ENCODE measurements at regions of chr4 and their contacts with region 1.

Region 1: GRCh38 chr4:48578132-48578968 is 88.3 kb downstream of the ZAR1 start:
- DNase-seq: peak; percentile 44
- ATAC-seq: peak; percentile 71
- H3K4me3 Mint-ChIP-seq: no peak overlapping the region
- H3K27ac Mint-ChIP-seq: no peak overlapping the region
- H3K4me1 Mint-ChIP-seq: peaks cover 4% of the 10 kb centered on the region
- H3K27me3 Mint-ChIP-seq: no peaks in the 10 kb centered on the region

Region 2: DNA sequence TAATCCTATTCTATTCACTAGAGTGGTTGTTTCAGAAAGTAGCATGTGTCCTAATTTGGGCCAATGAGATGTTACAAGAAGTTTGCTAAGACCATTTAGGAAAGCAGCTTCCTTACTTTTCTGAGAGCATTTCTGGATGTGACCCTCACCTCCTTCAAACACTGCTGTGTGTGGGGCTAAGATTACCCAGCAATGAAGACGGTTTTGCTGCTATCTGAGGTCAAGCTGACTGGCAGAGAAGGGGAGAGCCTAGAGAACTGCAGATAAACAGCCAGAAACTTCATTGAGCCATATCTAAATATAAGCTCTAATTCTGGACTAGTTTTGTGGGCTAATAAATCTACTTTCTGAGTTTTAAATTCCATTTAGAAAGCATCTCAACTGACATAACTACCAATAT is 51.9 kb before region 1 on chr4:
- CTCF ChIA-PET with region 1: no interaction called
- DNase-seq: no peak
- ATAC-seq: no peak
- H3K4me3 Mint-ChIP-seq: no peak overlapping the region
- H3K27ac Mint-ChIP-seq: no peak overlapping the region
- H3K4me1 Mint-ChIP-seq: no peaks in the 10 kb centered on the region
- H3K27me3 Mint-ChIP-seq: no peaks in the 10 kb centered on the region

Region 3: GRCh38 chr4:48681856-48682255 is 103.5 kb after region 1 on chr4:
- CTCF ChIA-PET with region 1: interaction called, 16 read pairs
- DNase-seq: no peak
- ATAC-seq: peak; percentile 78
- H3K4me3 Mint-ChIP-seq: no peak overlapping the region
- H3K27ac Mint-ChIP-seq: peak overlapping the region; percentile 32
- H3K4me1 Mint-ChIP-seq: peaks cover 17% of the 10 kb centered on the region
- H3K27me3 Mint-ChIP-seq: no peaks in the 10 kb centered on the region

Region 4: DNA sequence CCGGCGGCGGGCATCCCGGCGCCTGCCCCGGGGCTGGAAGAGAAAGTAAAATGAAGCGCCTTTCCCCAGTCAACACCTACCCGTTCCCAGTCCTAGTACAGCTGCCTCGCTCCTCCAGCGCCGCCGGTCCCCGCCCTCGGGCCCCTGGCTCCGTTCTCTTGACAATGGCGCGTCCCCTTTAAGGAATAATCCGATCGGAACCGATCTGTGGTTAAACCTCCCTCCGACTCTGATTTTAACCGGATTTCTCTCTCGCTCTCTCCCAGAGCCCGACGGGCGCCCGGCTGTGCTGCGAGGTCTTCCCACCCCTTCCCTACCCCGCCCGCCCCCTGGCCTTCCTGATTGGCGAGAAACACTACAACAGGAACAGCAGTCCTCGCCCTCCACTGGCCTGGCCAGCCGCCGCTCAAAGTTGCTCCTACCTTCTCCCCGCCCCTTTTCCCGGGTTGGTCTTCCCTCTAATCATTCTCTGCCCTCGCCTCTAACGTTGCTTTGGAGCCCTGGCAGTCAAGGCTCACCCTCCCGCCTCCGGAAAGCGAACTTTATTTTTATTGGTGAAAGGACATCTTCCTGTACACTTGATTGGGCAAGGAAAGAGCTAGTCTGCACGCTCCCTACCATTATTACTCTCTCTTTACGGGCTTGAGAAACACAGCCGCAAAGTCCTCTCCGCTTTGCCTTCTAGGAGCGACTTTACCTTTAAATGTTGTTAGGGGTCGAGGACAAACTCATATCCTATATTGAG is 201.8 kb after region 1 on chr4 and contains the start of gene FRYL:
- CTCF ChIA-PET with region 1: interaction called, 10 read pairs
- DNase-seq: peak; percentile 99
- ATAC-seq: peak; percentile 93
- H3K4me3 Mint-ChIP-seq: peak within 1 kb of the TSS; percentile 96
- H3K27ac Mint-ChIP-seq: peak within 1 kb of the TSS; percentile 91
- H3K4me1 Mint-ChIP-seq: peaks cover 31% of the 10 kb centered on the region
- H3K27me3 Mint-ChIP-seq: no peaks in the 10 kb centered on the region
- total RNA-seq, gene FRYL: 80.8 to 97.3 TPM

Region 5: GRCh38 chr4:48963042-48963679 is 384.8 kb after region 1 on chr4:
- CTCF ChIA-PET with region 1: interaction called, 23 read pairs
- DNase-seq: peak; percentile 83
- ATAC-seq: peak; percentile 84
- H3K4me3 Mint-ChIP-seq: no peak overlapping the region
- H3K27ac Mint-ChIP-seq: no peak overlapping the region
- H3K4me1 Mint-ChIP-seq: no peaks in the 10 kb centered on the region
- H3K27me3 Mint-ChIP-seq: peaks cover 2% of the 10 kb centered on the region

Measured in activated CD8-positive, alpha-beta memory T cell treated with anti-CD3 and anti-CD28 coated beads, Interleukin-2, amount 10 ng/mL, durations not matched to agents 7 days and 5 days (primary cell).